H1 (cell line): ENCODE measurements at regions of chr7 and their contacts with region 1.

Region 1: DNA sequence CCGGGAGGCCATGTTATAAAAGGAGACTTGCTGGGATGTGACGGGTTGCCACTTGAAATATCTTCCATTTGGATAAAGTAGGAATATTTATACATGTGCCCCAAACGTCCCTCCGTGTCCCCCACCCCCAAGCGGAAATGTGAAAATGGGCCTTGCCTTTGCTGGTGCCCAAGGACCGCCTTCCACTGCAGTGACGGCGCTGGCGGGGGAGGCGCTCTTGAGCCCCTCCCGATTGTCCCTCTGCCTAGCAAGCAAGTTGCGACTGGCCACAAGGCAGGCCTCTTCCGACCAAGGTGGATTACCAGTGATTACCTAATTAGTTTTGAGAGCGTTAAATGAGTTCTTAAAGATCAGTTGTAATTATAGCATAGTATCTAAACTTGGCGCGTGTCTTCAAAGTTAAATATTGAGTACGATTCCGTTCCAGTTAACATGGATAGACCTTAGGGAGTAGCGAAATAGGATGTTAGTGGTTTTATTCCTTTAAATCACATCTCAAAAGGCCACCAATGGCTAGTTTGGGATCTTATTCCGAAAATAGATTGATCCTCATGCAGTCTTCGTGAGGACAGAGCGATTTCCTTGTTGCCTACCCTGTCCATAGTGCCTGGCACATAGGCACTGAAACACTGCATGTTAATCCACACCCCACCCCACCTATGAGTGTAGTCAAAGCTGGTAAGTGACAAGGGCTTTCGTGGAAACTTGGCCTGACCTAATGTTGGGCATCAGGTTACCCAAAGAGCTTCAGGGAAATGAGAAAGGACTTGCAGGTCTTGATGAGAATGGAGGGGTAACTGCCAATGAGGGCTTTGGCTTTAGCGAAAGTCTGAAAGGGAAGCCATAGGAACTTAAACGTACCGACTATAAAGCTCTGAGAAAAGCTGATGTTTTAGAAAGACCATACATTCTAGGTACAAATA is 1.1 kb downstream of the PPIA start:
- DNase-seq: peak; percentile 58 to 73
- H3K4me3 ChIP-seq: peak overlapping the region; percentile 70 to 98 (median 90)
- H3K27ac ChIP-seq: peak overlapping the region; percentile 98
- H3K4me1 ChIP-seq: peaks cover 0 to 5% (median 0%) of the 10 kb centered on the region in 4 experiments; a peak in 3 of 7 replicates
- H3K27me3 ChIP-seq: no peaks in the 10 kb centered on the region
- CTCF ChIP-seq: peak; percentile 33 to 68 (median 54); a peak in 3 of 4 replicates
- EP300 ChIP-seq: no peak
- POLR2A ChIP-seq: peak; percentile 68 to 79
- RAD21 ChIP-seq: peak; percentile 29 to 35; a peak in 2 of 4 replicates

Region 2: DNA sequence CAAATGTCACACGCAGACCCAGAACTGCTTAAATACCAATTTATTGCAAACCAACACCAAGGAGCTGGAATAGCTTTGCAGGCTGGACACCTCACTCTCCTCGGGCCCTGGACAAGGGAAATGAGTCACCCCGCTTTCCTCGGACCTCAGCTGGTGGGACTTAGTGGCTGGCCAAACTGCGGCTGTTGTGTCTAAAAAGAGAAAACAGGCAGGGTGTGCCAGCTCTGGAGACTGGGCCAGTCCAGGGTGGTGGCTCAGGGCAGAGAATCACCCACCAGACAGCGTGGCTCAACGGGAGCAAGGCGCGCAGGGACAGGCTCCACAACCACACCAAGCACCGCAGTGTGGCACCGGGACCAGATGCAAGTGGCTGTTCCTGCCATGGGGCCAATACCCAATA is 414.0 kb before region 1 on chr7:
- CTCF ChIA-PET with region 1: no interaction called
- POLR2A ChIA-PET with region 1: no interaction called
- DNase-seq: peak in 1 of 2 experiments; percentile 27
- H3K4me3 ChIP-seq: no peak overlapping the region
- H3K27ac ChIP-seq: no peak overlapping the region
- H3K4me1 ChIP-seq: no peaks in the 10 kb centered on the region
- H3K27me3 ChIP-seq: no peaks in the 10 kb centered on the region
- CTCF ChIP-seq: no peak
- EP300 ChIP-seq: no peak
- POLR2A ChIP-seq: no peak
- RAD21 ChIP-seq: no peak

Region 3: GRCh38 chr7:44748045-44748947 is 49.3 kb before region 1 on chr7 and contains the start of gene ZMIZ2:
- CTCF ChIA-PET with region 1: no interaction called
- POLR2A ChIA-PET with region 1: interaction called, 34 read pairs
- DNase-seq: peak; percentile 38 to 98
- H3K4me3 ChIP-seq: peak within 1 kb of the TSS; percentile 63 to 98 (median 91)
- H3K27ac ChIP-seq: peak within 1 kb of the TSS; percentile 83; the same call in 1 of the 2 replicates
- H3K4me1 ChIP-seq: peaks cover 0 to 26% (median 11%) of the 10 kb centered on the region in 4 experiments; a peak in 6 of 7 replicates
- H3K27me3 ChIP-seq: no peaks in the 10 kb centered on the region
- CTCF ChIP-seq: no peak; a peak in 1 of 4 replicates
- EP300 ChIP-seq: 0 out of 3 replicates have a peak, but pooled peaks of 1 of the 2 experiments have one; percentile 27
- POLR2A ChIP-seq: peak; percentile 0 to 33; a peak in 2 of 3 replicates
- RAD21 ChIP-seq: no peak
- total RNA-seq, gene ZMIZ2: 66.4 and 72.2 TPM in 2 replicates

Region 4: GRCh38 chr7:44787041-44787440 is 10.5 kb before region 1 on chr7:
- CTCF ChIA-PET with region 1: interaction called, 3 read pairs
- POLR2A ChIA-PET with region 1: interaction called, 24 read pairs
- DNase-seq: no peak
- H3K4me3 ChIP-seq: no peak overlapping the region
- H3K27ac ChIP-seq: no peak overlapping the region
- H3K4me1 ChIP-seq: peaks cover 0 to 4% (median 0%) of the 10 kb centered on the region in 4 experiments; a peak in 3 of 7 replicates
- H3K27me3 ChIP-seq: no peaks in the 10 kb centered on the region
- CTCF ChIP-seq: no peak
- EP300 ChIP-seq: no peak
- POLR2A ChIP-seq: no peak
- RAD21 ChIP-seq: no peak

Region 5: GRCh38 chr7:44819292-44819691 is 21.7 kb after region 1 on chr7:
- CTCF ChIA-PET with region 1: interaction called, 5 read pairs
- POLR2A ChIA-PET with region 1: interaction called, 20 read pairs
- DNase-seq: no peak
- H3K4me3 ChIP-seq: no peak overlapping the region
- H3K27ac ChIP-seq: no peak overlapping the region
- H3K4me1 ChIP-seq: no peaks in the 10 kb centered on the region
- H3K27me3 ChIP-seq: no peaks in the 10 kb centered on the region
- CTCF ChIP-seq: no peak
- EP300 ChIP-seq: no peak
- POLR2A ChIP-seq: no peak
- RAD21 ChIP-seq: no peak

Region 6: DNA sequence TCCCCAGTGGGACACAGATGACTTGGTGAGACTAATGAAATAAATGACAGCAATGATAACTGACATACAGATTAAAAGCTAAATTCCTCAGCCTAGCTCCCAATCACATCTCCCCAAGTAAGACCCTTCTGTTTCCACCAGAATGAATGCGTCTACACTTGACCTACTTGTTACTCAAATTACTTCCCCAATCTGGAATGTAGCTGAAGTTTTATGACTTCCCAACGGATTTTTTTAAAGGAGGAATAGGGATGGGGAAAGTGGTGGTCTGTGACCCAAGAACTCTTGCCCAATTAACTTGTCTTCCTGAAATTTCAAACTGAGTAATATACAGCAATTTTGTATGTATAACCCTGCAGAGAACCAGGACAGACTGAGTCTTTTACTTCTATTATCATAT is 41.2 kb after region 1 on chr7:
- CTCF ChIA-PET with region 1: no interaction called
- POLR2A ChIA-PET with region 1: interaction called, 14 read pairs
- DNase-seq: no peak
- H3K4me3 ChIP-seq: no peak overlapping the region
- H3K27ac ChIP-seq: no peak overlapping the region
- H3K4me1 ChIP-seq: no peaks in the 10 kb centered on the region
- H3K27me3 ChIP-seq: no peaks in the 10 kb centered on the region
- CTCF ChIP-seq: no peak
- EP300 ChIP-seq: no peak
- POLR2A ChIP-seq: no peak
- RAD21 ChIP-seq: no peak

Region 7: GRCh38 chr7:44962483-44963251 is 165.1 kb after region 1 on chr7:
- CTCF ChIA-PET with region 1: interaction called, 10 read pairs
- POLR2A ChIA-PET with region 1: no interaction called
- DNase-seq: peak in 1 of 2 experiments; percentile 67
- H3K4me3 ChIP-seq: peak overlapping the region; percentile 20 to 58 (median 38)
- H3K27ac ChIP-seq: no peak overlapping the region
- H3K4me1 ChIP-seq: peaks cover 0 to 11% (median 4%) of the 10 kb centered on the region in 4 experiments; a peak in 4 of 7 replicates
- H3K27me3 ChIP-seq: peaks cover 10 to 40% (median 23%) of the 10 kb centered on the region in 4 experiments; a peak in 6 of 7 replicates
- CTCF ChIP-seq: peak in 1 of 3 experiments; percentile 12; a peak in 1 of 4 replicates
- EP300 ChIP-seq: no peak
- POLR2A ChIP-seq: 0 out of 3 replicates have a peak, but pooled peaks of 1 of the 2 experiments have one; percentile 36
- RAD21 ChIP-seq: peak; percentile 22 to 31; a peak in 2 of 4 replicates